MCF 10A (cell line): ENCODE measurements at regions of chr11 and their contacts with region 1.

Region 1: GRCh38 chr11:91981995-91982394 is 242.6 kb upstream of the FAT3 start:
- DNase-seq: peak; percentile 95
- H3K4me3 Mint-ChIP-seq: peak overlapping the region; percentile 44
- H3K27ac Mint-ChIP-seq: peak overlapping the region; percentile 98
- H3K4me1 Mint-ChIP-seq: peaks cover 34% of the 10 kb centered on the region
- H3K27me3 Mint-ChIP-seq: no peaks in the 10 kb centered on the region
- CTCF ChIP-seq: no peak

Region 2: GRCh38 chr11:91857196-91857595 is 124.8 kb before region 1 on chr11:
- CTCF ChIA-PET with region 1: interaction called, 4 read pairs
- POLR2A ChIA-PET with region 1: no interaction called
- intact Hi-C with region 1: loop called (anchors 10 kb)
- DNase-seq: peak; percentile 79
- H3K4me3 Mint-ChIP-seq: no peak overlapping the region
- H3K27ac Mint-ChIP-seq: peak overlapping the region; percentile 82
- H3K4me1 Mint-ChIP-seq: peaks cover 22% of the 10 kb centered on the region
- H3K27me3 Mint-ChIP-seq: no peaks in the 10 kb centered on the region
- CTCF ChIP-seq: no peak

Region 3: GRCh38 chr11:91955206-91955605 is 26.8 kb before region 1 on chr11:
- CTCF ChIA-PET with region 1: no interaction called
- POLR2A ChIA-PET with region 1: no interaction called
- intact Hi-C with region 1: no loop called
- DNase-seq: no peak
- H3K4me3 Mint-ChIP-seq: no peak overlapping the region
- H3K27ac Mint-ChIP-seq: no peak overlapping the region
- H3K4me1 Mint-ChIP-seq: no peaks in the 10 kb centered on the region
- H3K27me3 Mint-ChIP-seq: no peaks in the 10 kb centered on the region
- CTCF ChIP-seq: no peak